Endothelial cell of umbilical vein (primary cell): ENCODE measurements at regions of chr12 and their contacts with region 1.

Region 1: DNA sequence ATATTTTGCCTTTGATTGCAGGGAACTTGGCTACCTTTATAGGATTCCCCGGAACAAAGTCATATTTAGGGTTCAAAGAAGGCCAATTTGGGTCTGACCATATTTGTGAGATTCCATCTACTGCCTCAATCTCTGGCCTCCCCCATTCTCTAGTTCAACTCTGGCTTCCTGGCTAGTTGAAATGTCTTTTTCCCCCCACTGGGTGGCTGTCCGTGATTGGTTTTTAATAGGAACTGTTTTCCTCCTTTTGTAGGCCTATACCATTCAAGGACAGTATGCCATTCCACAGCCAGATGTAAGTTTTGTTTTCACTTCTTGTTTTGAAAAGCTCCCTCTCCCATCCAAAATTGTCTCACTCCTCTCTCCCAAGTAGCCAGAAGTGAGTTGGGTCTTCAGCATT is 13.8 kb downstream of the PCBP2 start:
- DNase-seq: no peak
- H3K4me3 ChIP-seq: no peak overlapping the region
- H3K27ac ChIP-seq: no peak overlapping the region
- H3K4me1 ChIP-seq: no peaks in the 10 kb centered on the region
- H3K27me3 ChIP-seq: no peaks in the 10 kb centered on the region
- CTCF ChIP-seq: peak in 1 of 2 donors; percentile 1
- POLR2A ChIP-seq: no peak

Region 2: DNA sequence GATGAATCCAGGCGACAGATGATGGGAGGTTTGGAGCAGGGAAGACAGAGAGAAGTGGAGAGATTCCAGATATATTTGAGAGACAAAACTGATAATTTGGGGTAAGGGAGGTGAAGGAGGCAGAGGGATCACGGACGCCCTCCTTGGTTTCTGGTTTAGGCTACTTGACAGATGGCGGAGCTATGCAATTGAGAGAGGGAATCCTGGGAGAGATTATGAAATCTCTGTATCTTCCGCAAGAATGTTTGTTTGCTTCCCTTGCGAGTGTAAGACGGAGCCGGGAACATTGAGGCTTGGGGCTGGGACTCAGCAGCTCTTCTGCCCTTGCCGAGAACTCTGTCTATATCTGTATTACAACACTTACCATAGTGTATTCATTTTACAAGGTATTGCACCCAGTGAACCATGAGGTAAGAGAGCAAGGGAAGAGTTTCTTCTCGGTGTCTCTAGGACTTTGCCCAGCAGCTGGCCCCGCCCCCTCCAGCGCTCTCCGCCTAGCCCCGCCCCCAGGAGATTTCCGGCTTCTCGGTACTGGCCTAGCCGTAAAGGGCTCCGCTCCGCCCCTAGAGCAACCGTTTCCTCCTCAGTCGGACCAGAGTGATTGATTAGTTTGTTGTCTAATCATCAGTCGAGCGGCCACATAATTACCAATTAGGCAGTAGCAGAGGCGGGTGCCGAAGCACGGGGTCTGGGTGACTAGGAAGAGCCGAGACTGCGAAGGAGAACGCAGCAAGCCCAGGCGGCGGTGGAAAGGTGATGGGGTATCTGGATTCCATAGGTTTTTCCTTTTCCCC is 24.4 kb before region 1 on chr12 and contains the start of gene PRR13:
- CTCF ChIA-PET with region 1: no interaction called
- POLR2A ChIA-PET with region 1: interaction called, 14 read pairs
- dilution Hi-C with region 1: no loop called
- intact Hi-C with region 1: no loop called
- DNase-seq: peak; percentile 99
- H3K4me3 ChIP-seq: peak within 1 kb of the TSS; percentile 65 to 99 (median 96)
- H3K27ac ChIP-seq: peak within 1 kb of the TSS; percentile 65
- H3K4me1 ChIP-seq: peaks cover 12% of the 10 kb centered on the region
- H3K27me3 ChIP-seq: no peaks in the 10 kb centered on the region
- CTCF ChIP-seq: no peak
- POLR2A ChIP-seq: peak; percentile 94
- total RNA-seq, gene PRR13: 123 and 139 TPM in 2 replicates